ENCODE measurements at regions of chr17 and their contacts with region 1.

Region 1: GRCh38 chr17:7572588-7573323 is 6.7 kb upstream of the CD68 start:
- DNase-seq: peak in 8 of 9 experiments; percentile 99 to 100 (median 100)
- ATAC-seq: peak; percentile 83
- H3K4me3 ChIP-seq: peak overlapping the region; percentile 97 to 100
- H3K4me3 Mint-ChIP-seq: peak overlapping the region; percentile 99
- H3K27ac ChIP-seq: peak overlapping the region; percentile 98 to 99
- H3K27ac Mint-ChIP-seq: peak overlapping the region; percentile 96
- H3K4me1 ChIP-seq: peaks cover 28% of the 10 kb centered on the region
- H3K4me1 Mint-ChIP-seq: peaks cover 48% of the 10 kb centered on the region
- H3K27me3 ChIP-seq: no peaks in the 10 kb centered on the region
- H3K27me3 Mint-ChIP-seq: no peaks in the 10 kb centered on the region
- CTCF ChIP-seq: no peak

Region 2: DNA sequence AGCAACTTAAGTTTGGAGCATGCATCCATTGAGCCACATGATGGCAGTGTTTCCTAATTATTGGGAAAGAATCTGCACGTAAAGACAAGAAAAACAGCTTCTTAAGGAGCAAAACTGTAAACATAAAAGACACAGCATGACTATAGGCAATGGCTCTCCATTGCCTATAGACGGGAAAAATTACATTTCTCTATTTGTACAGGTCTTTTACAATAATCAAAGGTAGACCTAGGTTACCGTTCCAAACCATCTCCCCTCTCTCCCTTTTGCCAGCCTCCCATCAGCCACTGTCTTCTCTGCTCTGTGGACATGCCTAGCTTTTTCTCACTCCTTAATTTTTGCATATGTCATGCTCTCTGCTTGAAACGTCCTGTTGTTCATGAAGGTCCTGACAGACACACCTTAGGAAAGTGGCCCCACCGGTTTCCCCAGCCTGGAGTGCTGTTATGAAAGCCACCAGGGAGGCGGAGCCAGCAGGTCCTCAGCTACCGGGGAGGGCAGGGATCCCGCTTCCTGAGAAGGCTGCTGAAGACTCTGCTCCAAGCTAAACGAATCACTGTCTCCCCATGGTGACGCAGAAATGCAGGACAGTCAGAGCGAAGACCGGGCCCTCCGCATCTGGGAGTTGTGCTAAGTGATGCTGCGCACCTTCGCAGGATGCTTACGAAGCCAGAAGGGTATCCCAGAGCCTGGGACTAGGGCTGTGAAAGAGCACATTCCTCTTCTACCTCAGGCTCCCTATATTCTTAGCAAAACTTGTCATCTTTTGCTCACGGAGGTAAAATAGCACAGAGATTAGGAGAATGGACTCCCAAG is 526.6 kb before region 1 on chr17:
- CTCF ChIA-PET with region 1: no interaction called
- POLR2A ChIA-PET with region 1: no interaction called
- intact Hi-C with region 1: loop called in 1 of 2 experiments (anchors 5 kb)
- DNase-seq: peak in 6 of 9 experiments; percentile 43 to 88 (median 59)
- ATAC-seq: peak; percentile 34
- H3K4me3 ChIP-seq: peak overlapping the region; percentile 42 to 58
- H3K4me3 Mint-ChIP-seq: peak overlapping the region; percentile 79
- H3K27ac ChIP-seq: peak overlapping the region; percentile 47 to 73
- H3K27ac Mint-ChIP-seq: peak overlapping the region; percentile 88
- H3K4me1 ChIP-seq: peaks cover 35% of the 10 kb centered on the region
- H3K4me1 Mint-ChIP-seq: peaks cover 36% of the 10 kb centered on the region
- H3K27me3 ChIP-seq: no peaks in the 10 kb centered on the region
- H3K27me3 Mint-ChIP-seq: no peaks in the 10 kb centered on the region
- CTCF ChIP-seq: peak; percentile 89

Region 3: DNA sequence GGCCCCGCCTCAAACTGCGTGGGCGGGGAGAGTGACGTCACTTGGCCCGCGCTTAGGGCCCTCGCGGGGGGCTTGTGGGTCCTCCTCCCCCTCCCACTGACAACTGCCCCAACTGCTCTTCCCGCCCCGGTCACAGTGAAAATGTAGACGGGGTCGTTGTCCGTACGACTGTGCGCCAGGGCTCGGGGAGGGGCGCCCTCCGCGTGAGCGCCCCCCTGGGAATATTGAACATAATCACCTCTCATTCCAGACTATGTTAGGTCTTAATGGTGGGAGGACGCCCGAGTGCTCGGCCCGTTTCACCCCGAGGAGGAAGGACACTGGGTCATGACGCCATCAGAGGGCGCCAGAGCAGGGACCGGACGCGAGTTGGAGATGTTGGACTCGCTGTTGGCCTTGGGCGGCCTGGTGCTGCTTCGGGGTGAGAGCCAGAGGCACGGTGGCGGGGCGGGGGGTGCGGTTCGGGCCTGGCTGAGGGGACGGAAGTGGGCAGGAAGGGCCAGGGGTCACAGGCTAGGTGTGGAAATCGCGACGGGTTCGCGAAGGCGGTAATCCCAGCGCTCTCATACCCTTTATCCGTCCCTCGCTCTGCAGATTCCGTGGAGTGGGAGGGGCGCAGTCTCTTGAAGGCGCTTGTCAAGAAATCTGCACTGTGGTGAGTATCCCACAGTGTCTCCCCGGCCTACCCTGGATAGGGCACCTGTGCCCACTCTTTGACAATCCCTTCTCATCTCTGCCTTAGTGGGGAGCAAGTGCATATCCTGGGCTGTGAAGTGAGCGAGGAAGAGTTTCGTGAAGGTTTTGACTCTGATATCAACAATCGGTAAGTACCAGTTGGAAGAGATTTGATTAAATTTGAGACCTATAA is 320.3 kb before region 1 on chr17 and contains the start of gene ELP5:
- CTCF ChIA-PET with region 1: no interaction called
- POLR2A ChIA-PET with region 1: no interaction called
- intact Hi-C with region 1: loop called (anchors 1 to 2 kb)
- DNase-seq: peak; percentile 73 to 99 (median 87)
- ATAC-seq: peak; percentile 48
- H3K4me3 ChIP-seq: peak within 1 kb of the TSS; percentile 81 to 92
- H3K4me3 Mint-ChIP-seq: peak within 1 kb of the TSS; percentile 97
- H3K27ac ChIP-seq: peak within 1 kb of the TSS; percentile 99
- H3K27ac Mint-ChIP-seq: peak within 1 kb of the TSS; percentile 100
- H3K4me1 ChIP-seq: peaks cover 31% of the 10 kb centered on the region
- H3K4me1 Mint-ChIP-seq: peaks cover 44% of the 10 kb centered on the region
- H3K27me3 ChIP-seq: no peaks in the 10 kb centered on the region
- H3K27me3 Mint-ChIP-seq: no peaks in the 10 kb centered on the region
- CTCF ChIP-seq: no peak
- total RNA-seq, gene ELP5: 38.9 to 39.0 TPM

Region 4: GRCh38 chr17:7454980-7455379 is 117.8 kb before region 1 on chr17:
- CTCF ChIA-PET with region 1: no interaction called
- POLR2A ChIA-PET with region 1: no interaction called
- intact Hi-C with region 1: loop called in 1 of 2 experiments (anchors 2 kb)
- DNase-seq: no peak
- ATAC-seq: peak; percentile 35
- H3K4me3 ChIP-seq: peak overlapping the region; percentile 82 to 83
- H3K4me3 Mint-ChIP-seq: peak overlapping the region; percentile 98
- H3K27ac ChIP-seq: peak overlapping the region; percentile 60 to 74
- H3K27ac Mint-ChIP-seq: peak overlapping the region; percentile 91
- H3K4me1 ChIP-seq: peaks cover 15% of the 10 kb centered on the region
- H3K4me1 Mint-ChIP-seq: peaks cover 24% of the 10 kb centered on the region
- H3K27me3 ChIP-seq: no peaks in the 10 kb centered on the region
- H3K27me3 Mint-ChIP-seq: no peaks in the 10 kb centered on the region
- CTCF ChIP-seq: no peak

Region 5: GRCh38 chr17:7589204-7589868 is 16.6 kb after region 1 on chr17:
- CTCF ChIA-PET with region 1: interaction called, 9 read pairs
- POLR2A ChIA-PET with region 1: interaction called, 66 read pairs
- intact Hi-C with region 1: loop called in 1 of 2 experiments (anchors 2 kb)
- DNase-seq: peak; percentile 40 to 81 (median 68)
- ATAC-seq: peak; percentile 89
- H3K4me3 ChIP-seq: no peak overlapping the region
- H3K4me3 Mint-ChIP-seq: no peak overlapping the region
- H3K27ac ChIP-seq: no peak overlapping the region
- H3K27ac Mint-ChIP-seq: peak overlapping the region; percentile 41
- H3K4me1 ChIP-seq: peaks cover 14% of the 10 kb centered on the region
- H3K4me1 Mint-ChIP-seq: peaks cover 12% of the 10 kb centered on the region
- H3K27me3 ChIP-seq: no peaks in the 10 kb centered on the region
- H3K27me3 Mint-ChIP-seq: no peaks in the 10 kb centered on the region
- CTCF ChIP-seq: peak; percentile 61